IMR-90 (cell line): ENCODE measurements at regions of chr3 and their contacts with region 1.

Region 1: GRCh38 chr3:5026331-5027218 is 47.3 kb downstream of the BHLHE40 start:
- DNase-seq: peak; percentile 95
- ATAC-seq: peak; percentile 86
- H3K4me3 ChIP-seq: peak overlapping the region; percentile 46
- H3K27ac ChIP-seq: peak overlapping the region; percentile 90
- H3K4me1 ChIP-seq: peaks cover 7% of the 10 kb centered on the region
- H3K27me3 ChIP-seq: no peaks in the 10 kb centered on the region
- CTCF ChIP-seq: peak; percentile 93
- POLR2A ChIP-seq: peak; percentile 79
- RAD21 ChIP-seq: peak; percentile 95

Region 2: DNA sequence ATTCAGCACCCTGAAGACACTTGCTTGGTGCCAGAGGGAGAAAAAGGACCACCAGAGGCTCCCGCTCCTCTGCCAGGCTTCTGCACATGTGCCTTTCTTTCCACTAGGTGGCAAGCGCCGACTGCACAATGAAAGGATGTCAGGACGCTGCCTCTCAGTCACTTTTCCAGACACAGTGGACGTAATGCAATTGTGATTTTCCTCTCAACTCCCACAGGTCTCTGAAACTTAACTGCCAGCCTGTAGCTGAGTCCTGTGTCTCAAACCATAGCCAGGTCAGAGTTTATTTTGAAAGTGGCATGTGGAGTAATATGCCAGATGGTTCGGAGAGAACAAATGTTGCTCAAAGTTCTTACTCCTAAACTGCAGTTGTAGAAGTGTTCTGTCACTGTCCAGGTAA is 370.5 kb before region 1 on chr3:
- CTCF ChIA-PET with region 1: no interaction called
- POLR2A ChIA-PET with region 1: no interaction called
- dilution Hi-C with region 1: no loop called
- in situ Hi-C with region 1: no loop called
- intact Hi-C with region 1: loop called (anchors 1 kb)
- DNase-seq: peak; percentile 75
- ATAC-seq: peak; percentile 98
- H3K4me3 ChIP-seq: no peak overlapping the region
- H3K27ac ChIP-seq: no peak overlapping the region
- H3K4me1 ChIP-seq: no peaks in the 10 kb centered on the region; the same call in 1 of the 2 replicates
- H3K27me3 ChIP-seq: no peaks in the 10 kb centered on the region
- CTCF ChIP-seq: peak; percentile 97
- POLR2A ChIP-seq: 0 out of 2 replicates have a peak, but pooled peaks have one; percentile 35
- RAD21 ChIP-seq: peak; percentile 99

Region 3: DNA sequence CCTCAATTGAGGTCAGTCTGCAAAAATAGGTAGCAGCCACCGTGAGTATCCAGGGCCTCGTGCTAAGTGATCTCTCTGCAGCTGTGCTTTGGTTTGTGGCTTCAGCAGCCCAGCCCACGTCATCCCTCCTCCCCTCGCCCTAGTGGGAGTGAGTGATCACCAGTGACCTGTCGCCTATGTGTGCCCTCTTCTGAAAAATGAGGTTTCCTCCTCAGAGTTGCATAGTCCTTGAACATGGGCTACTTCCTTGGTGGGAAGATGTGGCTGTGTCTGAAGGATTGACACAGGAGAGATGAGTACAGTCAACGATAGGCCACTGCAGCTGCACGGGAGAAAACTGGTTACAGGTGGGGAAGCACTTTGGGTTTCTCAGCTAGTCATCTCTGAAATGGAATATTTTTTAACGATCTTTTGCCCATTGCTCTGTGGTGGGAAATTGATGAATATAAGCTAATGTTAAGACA is 192.1 kb before region 1 on chr3:
- CTCF ChIA-PET with region 1: no interaction called
- POLR2A ChIA-PET with region 1: no interaction called
- dilution Hi-C with region 1: no loop called
- in situ Hi-C with region 1: no loop called
- intact Hi-C with region 1: loop called (anchors 5 kb)
- DNase-seq: peak; percentile 17
- ATAC-seq: no peak
- H3K4me3 ChIP-seq: no peak overlapping the region
- H3K27ac ChIP-seq: no peak overlapping the region
- H3K4me1 ChIP-seq: peaks cover 6% of the 10 kb centered on the region
- H3K27me3 ChIP-seq: no peaks in the 10 kb centered on the region
- CTCF ChIP-seq: no peak
- POLR2A ChIP-seq: no peak
- RAD21 ChIP-seq: no peak

Region 4: GRCh38 chr3:4880850-4881249 is 145.7 kb before region 1 on chr3:
- CTCF ChIA-PET with region 1: no interaction called
- POLR2A ChIA-PET with region 1: no interaction called
- dilution Hi-C with region 1: no loop called
- in situ Hi-C with region 1: no loop called
- intact Hi-C with region 1: loop called (anchors 5 kb)
- DNase-seq: no peak
- ATAC-seq: no peak
- H3K4me3 ChIP-seq: no peak overlapping the region
- H3K27ac ChIP-seq: no peak overlapping the region
- H3K4me1 ChIP-seq: no peaks in the 10 kb centered on the region
- H3K27me3 ChIP-seq: no peaks in the 10 kb centered on the region; the same call in 1 of the 2 replicates
- CTCF ChIP-seq: no peak
- POLR2A ChIP-seq: no peak
- RAD21 ChIP-seq: no peak

Region 5: DNA sequence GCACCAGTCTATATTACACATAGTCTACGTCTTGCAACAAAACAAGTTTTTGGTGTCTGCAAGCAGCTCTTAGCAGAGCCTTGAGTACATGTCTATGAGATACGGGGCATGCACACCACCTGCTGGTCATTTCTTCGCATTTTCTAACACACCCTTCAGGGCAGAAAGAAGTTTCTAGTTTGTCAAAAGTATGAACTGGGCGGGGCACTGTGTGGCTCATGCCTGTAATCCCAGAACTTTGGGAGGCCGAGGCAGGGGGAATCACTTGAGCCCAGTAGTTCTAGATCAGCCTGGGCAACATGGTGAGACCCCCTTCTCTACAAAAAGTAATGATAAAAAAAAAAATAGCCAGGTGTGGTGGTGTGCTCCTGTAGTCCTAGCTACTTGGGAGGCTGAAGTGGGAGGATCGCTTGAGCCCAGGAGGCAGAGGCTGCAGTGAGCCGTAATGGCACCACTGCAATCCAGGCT is 31.3 kb after region 1 on chr3:
- CTCF ChIA-PET with region 1: interaction called, 4 read pairs
- POLR2A ChIA-PET with region 1: no interaction called
- dilution Hi-C with region 1: no loop called
- in situ Hi-C with region 1: no loop called
- intact Hi-C with region 1: loop called (anchors 1 kb)
- DNase-seq: peak; percentile 85
- ATAC-seq: peak; percentile 83
- H3K4me3 ChIP-seq: no peak overlapping the region
- H3K27ac ChIP-seq: no peak overlapping the region
- H3K4me1 ChIP-seq: peaks cover 6% of the 10 kb centered on the region
- H3K27me3 ChIP-seq: peaks cover 3% of the 10 kb centered on the region; the same call in 1 of the 2 replicates
- CTCF ChIP-seq: peak; percentile 80
- POLR2A ChIP-seq: no peak
- RAD21 ChIP-seq: peak; percentile 90